ENCODE measurements at regions of chr1 and their contacts with region 1.

Region 1: GRCh38 chr1:113429443-113430153 is 39.3 kb downstream of the MAGI3 start:
- DNase-seq: no peak
- ATAC-seq: peak in 2 of 4 donors; percentile 28 to 39
- H3K4me3 ChIP-seq: no peak overlapping the region
- H3K27ac ChIP-seq: peak overlapping the region in 1 of 12 donors; percentile 8
- H3K4me1 ChIP-seq: peaks cover 0 to 13% (median 4%) of the 10 kb centered on the region in 12 donors
- H3K27me3 ChIP-seq: no peaks in the 10 kb centered on the region
- CTCF ChIP-seq: no peak
- POLR2A ChIP-seq: no peak

Region 2: DNA sequence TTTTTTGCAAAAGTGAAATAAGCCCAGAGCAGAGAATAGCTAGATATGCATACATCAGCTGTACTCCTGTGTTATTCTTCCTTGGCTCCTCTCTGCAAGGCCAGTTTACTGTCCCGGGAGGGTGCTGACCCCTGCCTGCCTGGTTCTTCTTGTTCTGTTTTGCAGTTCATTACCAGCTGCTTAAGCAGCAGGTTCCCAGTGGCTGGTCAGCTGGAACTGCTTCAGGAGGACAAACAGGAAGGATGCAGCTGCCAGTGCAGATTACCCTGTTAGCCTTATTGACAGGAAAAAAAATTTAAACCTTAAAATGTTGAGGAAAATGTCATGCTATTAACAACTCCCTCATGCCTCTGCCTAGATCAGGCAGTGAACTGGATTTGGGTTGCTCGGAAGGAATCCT is 372.6 kb before region 1 on chr1:
- intact Hi-C with region 1: no loop called
- DNase-seq: peak in 1 of 5 donors; percentile 29
- ATAC-seq: no peak
- H3K4me3 ChIP-seq: no peak overlapping the region
- H3K27ac ChIP-seq: no peak overlapping the region
- H3K4me1 ChIP-seq: peaks cover 0 to 18% (median 10%) of the 10 kb centered on the region in 12 donors
- H3K27me3 ChIP-seq: no peaks in the 10 kb centered on the region
- CTCF ChIP-seq: no peak
- POLR2A ChIP-seq: no peak

Region 3: DNA sequence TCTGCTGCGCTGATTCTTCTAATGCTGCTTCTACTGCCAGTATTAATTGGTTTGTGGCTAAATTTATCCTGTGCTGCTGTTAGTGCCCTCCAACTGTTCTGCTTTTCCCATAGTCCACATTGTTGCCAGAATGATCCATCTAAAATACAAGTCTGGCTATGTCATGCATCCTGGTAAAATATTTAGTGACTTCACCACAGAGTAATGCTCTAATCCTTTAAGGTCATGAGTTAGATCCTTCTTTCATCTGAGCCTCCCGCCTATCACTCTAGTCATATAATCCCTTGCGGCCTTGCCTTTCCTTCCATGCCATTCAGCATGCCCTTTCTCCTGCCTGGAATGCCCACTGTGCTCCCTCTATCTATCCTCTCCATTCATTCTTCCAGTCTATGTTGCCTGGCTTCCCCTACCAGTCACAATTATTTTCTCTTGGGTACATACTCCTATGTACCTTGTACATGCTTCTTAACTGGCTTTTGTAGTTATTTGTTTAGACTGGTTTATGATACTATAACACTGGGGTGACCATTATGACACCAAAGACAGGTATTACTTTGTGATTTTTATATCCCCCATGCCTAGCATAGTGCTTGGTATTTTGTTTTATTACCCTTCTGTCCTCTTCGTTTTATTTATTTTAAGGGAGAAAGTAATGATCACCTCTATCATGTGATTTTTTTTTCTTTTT is 104.7 kb after region 1 on chr1:
- intact Hi-C with region 1: loop called in 1 of 10 experiments (anchors 10 kb)
- DNase-seq: no peak
- ATAC-seq: peak in 1 of 4 donors; percentile 11
- H3K4me3 ChIP-seq: no peak overlapping the region
- H3K27ac ChIP-seq: no peak overlapping the region
- H3K4me1 ChIP-seq: peaks cover 0 to 6% (median 0%) of the 10 kb centered on the region in 12 donors
- H3K27me3 ChIP-seq: no peaks in the 10 kb centered on the region
- CTCF ChIP-seq: no peak
- POLR2A ChIP-seq: no peak

Measured in heart left ventricle (tissue), 16 donors.